ENCODE measurements at regions of chr21 and their contacts with region 1.

Region 1: DNA sequence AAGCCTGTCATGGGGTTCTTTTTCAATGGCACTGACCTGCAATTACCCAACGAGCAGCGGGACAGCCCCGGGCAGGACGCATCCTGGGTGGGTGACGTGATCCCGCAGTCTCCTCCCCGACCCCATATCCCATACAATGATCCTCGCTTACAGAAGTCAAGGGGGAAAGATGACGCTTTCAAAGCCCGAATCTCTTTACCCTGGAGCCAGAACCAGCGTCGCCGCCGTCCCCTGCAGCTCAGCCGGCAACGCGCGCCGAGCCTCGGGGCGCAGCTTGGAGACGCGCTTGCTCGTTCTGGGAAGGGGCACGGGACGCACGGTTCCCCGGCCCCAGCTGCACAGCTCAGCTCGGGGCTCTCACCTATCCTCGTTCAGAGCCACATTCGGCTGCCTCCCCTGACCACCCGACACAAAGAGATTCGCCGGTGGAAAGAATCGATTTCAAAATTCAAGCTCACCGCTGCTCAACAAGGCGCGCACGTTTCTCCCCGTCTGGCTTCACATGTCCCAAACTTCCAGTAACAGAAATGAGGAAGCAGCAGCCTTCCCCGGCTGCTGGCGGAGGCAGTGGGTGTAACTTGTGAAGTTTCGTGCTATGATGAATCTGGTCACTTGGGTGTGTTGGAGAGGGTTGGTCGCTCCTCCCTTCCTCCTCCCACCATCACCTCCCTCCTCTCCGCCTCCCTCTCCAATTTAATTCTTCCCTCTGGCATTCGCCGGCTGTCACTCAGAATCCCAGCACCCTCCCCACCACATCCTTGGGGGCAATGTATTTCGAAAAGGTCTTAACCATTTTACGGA is at the start of gene TIAM1:
- DNase-seq: peak; percentile 58
- H3K4me3 Mint-ChIP-seq: peak within 1 kb of the TSS; percentile 91
- H3K27ac Mint-ChIP-seq: peak within 1 kb of the TSS; percentile 88
- H3K4me1 Mint-ChIP-seq: peaks cover 58% of the 10 kb centered on the region
- H3K27me3 Mint-ChIP-seq: no peaks in the 10 kb centered on the region
- total RNA-seq, gene TIAM1: 50.1 to 51.0 TPM

Region 2: DNA sequence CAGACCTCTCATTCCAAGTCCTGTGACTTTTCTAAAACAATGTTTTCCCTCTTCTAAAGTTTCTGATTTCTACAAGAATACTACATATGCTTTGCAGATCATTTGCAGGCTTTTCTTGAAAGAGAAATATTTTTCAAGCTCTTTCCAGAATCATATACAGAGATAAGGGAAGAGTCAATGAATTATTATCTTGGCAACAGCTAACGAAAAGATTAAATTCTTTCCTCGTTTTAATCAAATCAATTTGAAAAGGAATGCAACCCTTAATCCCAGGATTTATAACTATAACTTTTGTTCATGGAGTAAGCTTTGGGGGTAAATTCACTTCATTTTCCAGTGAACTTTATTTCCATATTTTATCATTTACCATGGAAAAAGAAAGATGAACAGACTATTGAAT is 469.4 kb before region 1 on chr21:
- CTCF ChIA-PET with region 1: no interaction called
- intact Hi-C with region 1: no loop called
- DNase-seq: no peak
- H3K4me3 Mint-ChIP-seq: no peak overlapping the region
- H3K27ac Mint-ChIP-seq: no peak overlapping the region
- H3K4me1 Mint-ChIP-seq: no peaks in the 10 kb centered on the region
- H3K27me3 Mint-ChIP-seq: peaks cover 6% of the 10 kb centered on the region

Region 3: GRCh38 chr21:31107871-31108270 is 236.0 kb before region 1 on chr21:
- CTCF ChIA-PET with region 1: no interaction called
- intact Hi-C with region 1: no loop called
- DNase-seq: no peak
- H3K4me3 Mint-ChIP-seq: no peak overlapping the region
- H3K27ac Mint-ChIP-seq: no peak overlapping the region
- H3K4me1 Mint-ChIP-seq: peaks cover 28% of the 10 kb centered on the region
- H3K27me3 Mint-ChIP-seq: no peaks in the 10 kb centered on the region

Region 4: DNA sequence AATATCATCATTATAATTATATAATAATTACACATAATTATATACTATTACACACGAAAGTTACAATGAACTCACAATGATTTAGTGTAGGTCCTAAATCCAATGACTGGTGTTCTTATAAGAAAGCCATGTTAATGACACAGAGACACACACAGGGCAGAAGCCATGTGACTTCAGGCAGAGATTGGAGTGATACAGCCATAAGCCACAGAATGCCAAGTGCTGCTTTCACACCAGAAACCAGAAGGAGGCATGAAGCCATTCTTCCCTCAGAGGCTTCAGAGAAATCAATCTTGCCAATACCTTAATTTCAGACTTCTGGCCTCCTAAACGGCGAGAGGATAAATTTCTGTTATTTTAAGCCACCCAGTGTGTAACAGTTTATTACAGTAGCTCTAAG is 158.2 kb before region 1 on chr21:
- CTCF ChIA-PET with region 1: interaction called, 3 read pairs
- intact Hi-C with region 1: loop called (anchors 1 kb)
- DNase-seq: peak; percentile 43
- H3K4me3 Mint-ChIP-seq: peak overlapping the region; percentile 70
- H3K27ac Mint-ChIP-seq: peak overlapping the region; percentile 98
- H3K4me1 Mint-ChIP-seq: peaks cover 76% of the 10 kb centered on the region
- H3K27me3 Mint-ChIP-seq: no peaks in the 10 kb centered on the region

Region 5: GRCh38 chr21:31293986-31294385 is 49.9 kb before region 1 on chr21:
- CTCF ChIA-PET with region 1: interaction called, 3 read pairs
- intact Hi-C with region 1: loop called (anchors 1 kb)
- DNase-seq: peak; percentile 88
- H3K4me3 Mint-ChIP-seq: no peak overlapping the region
- H3K27ac Mint-ChIP-seq: peak overlapping the region; percentile 84
- H3K4me1 Mint-ChIP-seq: peaks cover 44% of the 10 kb centered on the region
- H3K27me3 Mint-ChIP-seq: no peaks in the 10 kb centered on the region

Region 6: GRCh38 chr21:31366825-31367224 is 22.9 kb after region 1 on chr21:
- CTCF ChIA-PET with region 1: no interaction called
- intact Hi-C with region 1: no loop called
- DNase-seq: no peak
- H3K4me3 Mint-ChIP-seq: no peak overlapping the region
- H3K27ac Mint-ChIP-seq: no peak overlapping the region
- H3K4me1 Mint-ChIP-seq: peaks cover 39% of the 10 kb centered on the region
- H3K27me3 Mint-ChIP-seq: no peaks in the 10 kb centered on the region

Region 7: DNA sequence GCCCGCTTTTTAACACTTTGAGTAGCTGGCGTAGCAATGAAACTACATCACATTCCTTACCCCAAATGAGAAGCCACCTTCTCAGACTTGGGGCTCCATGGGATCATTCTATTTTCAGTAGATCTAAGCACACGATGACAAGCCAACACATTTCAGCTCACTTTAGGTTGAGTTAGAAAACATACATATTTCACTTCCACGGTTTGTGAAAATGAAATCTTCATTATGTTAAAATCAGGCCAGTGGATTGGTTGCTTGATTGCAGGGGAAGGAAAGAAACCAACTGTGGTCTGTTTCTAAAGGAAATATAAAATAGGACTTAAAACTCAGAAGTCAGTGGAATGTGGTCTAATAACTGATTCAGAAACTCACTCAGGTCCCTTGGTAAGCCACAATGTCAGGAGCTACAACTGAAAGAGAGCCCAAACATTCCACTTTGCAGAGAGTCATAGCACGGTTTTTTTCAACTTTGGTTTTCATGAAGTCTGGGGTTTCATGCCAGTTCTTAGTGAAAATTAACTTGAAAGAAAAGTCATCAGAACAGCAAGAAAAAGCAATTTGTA is 82.4 kb after region 1 on chr21:
- CTCF ChIA-PET with region 1: no interaction called
- intact Hi-C with region 1: loop called (anchors 1 kb)
- DNase-seq: peak; percentile 23
- H3K4me3 Mint-ChIP-seq: no peak overlapping the region
- H3K27ac Mint-ChIP-seq: peak overlapping the region; percentile 46
- H3K4me1 Mint-ChIP-seq: peaks cover 21% of the 10 kb centered on the region
- H3K27me3 Mint-ChIP-seq: no peaks in the 10 kb centered on the region